CD4-positive, alpha-beta memory T cell (primary cell): ENCODE measurements at regions of chr1 and their contacts with region 1.

Region 1: DNA sequence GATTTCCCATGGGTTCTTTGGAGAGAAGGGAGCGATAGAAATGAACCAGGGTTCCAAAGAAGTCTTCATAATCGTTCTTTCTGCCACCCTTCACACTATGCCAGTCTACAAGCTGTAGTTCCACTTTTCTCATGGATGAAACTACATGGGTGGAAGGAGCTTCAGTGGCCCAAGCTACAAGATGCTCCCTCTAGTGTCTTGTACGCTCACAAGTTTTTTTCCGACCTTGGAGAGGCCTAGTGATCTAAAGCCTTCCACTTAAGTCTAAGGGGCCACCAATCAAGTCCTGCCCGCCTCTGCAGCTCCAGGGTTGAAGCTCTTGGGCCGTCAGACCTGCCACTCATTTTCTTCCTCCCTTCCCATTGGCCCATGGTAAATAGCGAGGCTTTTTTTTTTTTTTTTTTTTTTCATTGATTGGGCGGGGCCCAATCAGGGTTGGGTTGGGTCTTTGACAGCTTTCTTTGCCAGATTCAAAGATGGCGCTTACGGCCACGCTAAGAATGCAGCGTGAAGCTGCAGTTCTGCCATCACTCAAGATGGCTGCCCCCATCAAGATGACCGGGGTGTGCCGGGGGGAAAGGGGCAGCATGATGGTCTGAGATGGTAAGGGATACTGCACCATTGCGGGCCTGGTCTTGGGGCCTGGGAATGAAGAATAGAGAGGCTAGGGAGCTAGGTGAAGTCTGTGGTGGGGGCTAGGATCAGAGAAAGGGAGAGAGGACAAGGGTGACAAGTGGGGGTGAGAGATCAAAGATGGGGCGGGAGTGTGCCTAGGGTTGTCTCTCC is at the start of gene TOMM40L:
- DNase-seq: peak; percentile 85 to 97 (median 95)
- H3K4me3 ChIP-seq: peak within 1 kb of the TSS; percentile 67 to 91
- H3K4me3 Mint-ChIP-seq: peak within 1 kb of the TSS; percentile 96 to 100 (median 98)
- H3K27ac ChIP-seq: peak within 1 kb of the TSS; percentile 63
- H3K27ac Mint-ChIP-seq: peak within 1 kb of the TSS; percentile 89 to 98 (median 97)
- H3K4me1 ChIP-seq: peaks cover 28% of the 10 kb centered on the region
- H3K4me1 Mint-ChIP-seq: peaks cover 20 to 37% (median 29%) of the 10 kb centered on the region in 4 donors
- H3K27me3 ChIP-seq: no peaks in the 10 kb centered on the region
- H3K27me3 Mint-ChIP-seq: no peaks in the 10 kb centered on the region
- total RNA-seq, gene TOMM40L: 8.2 to 8.8 TPM

Region 2: GRCh38 chr1:159483501-159483900 is 1742.2 kb before region 1 on chr1:
- CTCF ChIA-PET with region 1: no interaction called
- POLR2A ChIA-PET with region 1: no interaction called
- intact Hi-C with region 1: no loop called
- DNase-seq: no peak
- H3K4me3 ChIP-seq: no peak overlapping the region
- H3K4me3 Mint-ChIP-seq: no peak overlapping the region
- H3K27ac ChIP-seq: no peak overlapping the region
- H3K27ac Mint-ChIP-seq: no peak overlapping the region
- H3K4me1 ChIP-seq: no peaks in the 10 kb centered on the region
- H3K4me1 Mint-ChIP-seq: no peaks in the 10 kb centered on the region
- H3K27me3 ChIP-seq: no peaks in the 10 kb centered on the region
- H3K27me3 Mint-ChIP-seq: peaks cover 5 to 8% of the 10 kb centered on the region in 2 donors

Region 3: GRCh38 chr1:161132410-161133219 is 93.1 kb before region 1 on chr1 and contains the start of gene DEDD:
- CTCF ChIA-PET with region 1: interaction called, 8 read pairs
- POLR2A ChIA-PET with region 1: interaction called, 11 read pairs
- intact Hi-C with region 1: loop called (anchors 1 kb)
- DNase-seq: peak; percentile 92 to 95 (median 93)
- H3K4me3 ChIP-seq: peak within 1 kb of the TSS; percentile 80 to 100
- H3K4me3 Mint-ChIP-seq: peak within 1 kb of the TSS in 1 of 8 donors; percentile 91
- H3K27ac ChIP-seq: peak within 1 kb of the TSS; percentile 95
- H3K27ac Mint-ChIP-seq: peak within 1 kb of the TSS in 3 of 7 donors; percentile 91 to 99 (median 95)
- H3K4me1 ChIP-seq: peaks cover 51% of the 10 kb centered on the region
- H3K4me1 Mint-ChIP-seq: peaks cover 29 to 43% (median 40%) of the 10 kb centered on the region in 4 donors
- H3K27me3 ChIP-seq: no peaks in the 10 kb centered on the region
- H3K27me3 Mint-ChIP-seq: no peaks in the 10 kb centered on the region
- total RNA-seq, gene DEDD: 39.1 to 41.4 TPM

Region 4: DNA sequence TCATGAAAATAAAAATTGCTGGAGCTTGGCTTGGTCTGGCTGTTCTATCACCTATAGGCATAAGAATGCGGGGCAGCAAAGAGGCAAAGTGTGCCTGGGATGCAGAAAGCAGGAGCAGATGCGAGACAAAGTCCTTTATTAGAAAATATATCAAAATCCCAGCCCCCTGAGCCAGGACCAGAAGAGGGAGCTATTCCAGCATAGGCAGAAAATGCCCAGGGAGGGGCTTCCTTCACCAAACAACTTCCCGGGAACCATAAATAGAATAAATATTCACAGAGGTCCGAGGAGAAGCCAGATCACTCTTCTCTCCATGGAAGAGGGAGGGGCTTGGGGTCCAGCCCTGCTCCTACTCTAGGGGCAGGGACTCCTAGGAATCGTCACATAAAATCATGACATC is 54.5 kb before region 1 on chr1:
- CTCF ChIA-PET with region 1: interaction called, 52 read pairs
- POLR2A ChIA-PET with region 1: interaction called, 51 read pairs
- intact Hi-C with region 1: loop called (anchors 1 kb)
- DNase-seq: no peak
- H3K4me3 ChIP-seq: no peak overlapping the region
- H3K4me3 Mint-ChIP-seq: no peak overlapping the region
- H3K27ac ChIP-seq: no peak overlapping the region
- H3K27ac Mint-ChIP-seq: peak overlapping the region in 3 of 7 donors; percentile 17 to 63 (median 59)
- H3K4me1 ChIP-seq: peaks cover 30% of the 10 kb centered on the region
- H3K4me1 Mint-ChIP-seq: peaks cover 27 to 77% (median 46%) of the 10 kb centered on the region in 4 donors
- H3K27me3 ChIP-seq: no peaks in the 10 kb centered on the region
- H3K27me3 Mint-ChIP-seq: no peaks in the 10 kb centered on the region

Region 5: GRCh38 chr1:161192476-161193465 is 33.0 kb before region 1 on chr1:
- CTCF ChIA-PET with region 1: interaction called, 131 read pairs
- POLR2A ChIA-PET with region 1: interaction called, 20 read pairs
- intact Hi-C with region 1: loop called (anchors 1 kb)
- DNase-seq: peak; percentile 66 to 74 (median 71)
- H3K4me3 ChIP-seq: no peak overlapping the region
- H3K4me3 Mint-ChIP-seq: peak overlapping the region in 4 of 8 donors; percentile 17 to 53 (median 32)
- H3K27ac ChIP-seq: no peak overlapping the region
- H3K27ac Mint-ChIP-seq: peak overlapping the region; percentile 14 to 92 (median 82)
- H3K4me1 ChIP-seq: peaks cover 47% of the 10 kb centered on the region
- H3K4me1 Mint-ChIP-seq: peaks cover 22 to 43% (median 32%) of the 10 kb centered on the region in 4 donors
- H3K27me3 ChIP-seq: no peaks in the 10 kb centered on the region
- H3K27me3 Mint-ChIP-seq: no peaks in the 10 kb centered on the region

Region 6: GRCh38 chr1:161292631-161293030 is 66.9 kb after region 1 on chr1:
- CTCF ChIA-PET with region 1: interaction called, 63 read pairs
- POLR2A ChIA-PET with region 1: no interaction called
- intact Hi-C with region 1: loop called (anchors 1 kb)
- DNase-seq: no peak
- H3K4me3 ChIP-seq: no peak overlapping the region
- H3K4me3 Mint-ChIP-seq: no peak overlapping the region
- H3K27ac ChIP-seq: no peak overlapping the region
- H3K27ac Mint-ChIP-seq: no peak overlapping the region
- H3K4me1 ChIP-seq: no peaks in the 10 kb centered on the region
- H3K4me1 Mint-ChIP-seq: peaks cover 0 to 5% (median under 1%) of the 10 kb centered on the region in 4 donors
- H3K27me3 ChIP-seq: no peaks in the 10 kb centered on the region
- H3K27me3 Mint-ChIP-seq: no peaks in the 10 kb centered on the region

Region 7: GRCh38 chr1:161367684-161368400 is 142.1 kb after region 1 on chr1 and contains the start of gene CFAP126:
- CTCF ChIA-PET with region 1: interaction called, 18 read pairs
- POLR2A ChIA-PET with region 1: interaction called, 4 read pairs
- intact Hi-C with region 1: loop called (anchors 5 kb)
- DNase-seq: peak; percentile 62 to 84 (median 75)
- H3K4me3 ChIP-seq: no peak within 1 kb of the TSS
- H3K4me3 Mint-ChIP-seq: no peak within 1 kb of the TSS
- H3K27ac ChIP-seq: peak within 1 kb of the TSS; percentile 35
- H3K27ac Mint-ChIP-seq: peak within 1 kb of the TSS; percentile 63 to 93 (median 85)
- H3K4me1 ChIP-seq: peaks cover 6% of the 10 kb centered on the region
- H3K4me1 Mint-ChIP-seq: peaks cover 7 to 9% (median 8%) of the 10 kb centered on the region in 4 donors
- H3K27me3 ChIP-seq: no peaks in the 10 kb centered on the region
- H3K27me3 Mint-ChIP-seq: no peaks in the 10 kb centered on the region
- total RNA-seq, gene CFAP126: not detected

Region 8: GRCh38 chr1:161749509-161750407 is 524.0 kb after region 1 on chr1 and contains the start of gene DUSP12:
- CTCF ChIA-PET with region 1: no interaction called
- POLR2A ChIA-PET with region 1: no interaction called
- intact Hi-C with region 1: loop called (anchors 10 kb)
- DNase-seq: peak; percentile 84 to 90 (median 86)
- H3K4me3 ChIP-seq: peak within 1 kb of the TSS; percentile 91 to 96
- H3K4me3 Mint-ChIP-seq: peak within 1 kb of the TSS; percentile 99 to 100 (median 99)
- H3K27ac ChIP-seq: peak within 1 kb of the TSS; percentile 75
- H3K27ac Mint-ChIP-seq: peak within 1 kb of the TSS; percentile 95 to 98 (median 96)
- H3K4me1 ChIP-seq: peaks cover 19% of the 10 kb centered on the region
- H3K4me1 Mint-ChIP-seq: peaks cover 18 to 35% (median 27%) of the 10 kb centered on the region in 4 donors
- H3K27me3 ChIP-seq: no peaks in the 10 kb centered on the region
- H3K27me3 Mint-ChIP-seq: peaks cover 1 to 6% of the 10 kb centered on the region in 2 donors
- total RNA-seq, gene DUSP12: 30.4 to 31.6 TPM